Lower leg skin (tissue), 4 donors: ENCODE measurements at regions of chr20 and their contacts with region 1.

Region 1: GRCh38 chr20:38075161-38075998 is 41.8 kb downstream of the RPRD1B start:
- DNase-seq: no peak
- H3K4me3 ChIP-seq: no peak overlapping the region
- CTCF ChIP-seq: no peak
- POLR2A ChIP-seq: no peak

Region 2: DNA sequence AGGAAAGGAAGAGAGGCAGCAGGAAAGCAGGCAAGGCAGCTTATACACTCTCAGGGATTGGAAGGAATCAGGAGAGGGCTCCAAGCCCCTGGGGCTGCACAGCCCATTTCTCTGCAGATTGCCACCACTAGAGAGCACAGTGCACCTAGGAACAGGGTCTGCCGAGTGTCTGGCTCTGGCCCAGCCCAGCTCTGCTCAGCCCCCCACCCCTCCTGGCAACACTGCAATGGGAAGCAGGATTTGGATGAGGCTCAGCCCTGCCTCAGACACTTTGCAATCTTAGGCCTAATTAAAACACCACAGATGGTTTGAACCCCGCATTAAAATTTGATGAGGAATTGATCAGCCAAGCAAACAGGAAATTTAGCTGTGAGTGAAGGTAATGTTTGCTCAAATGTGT is 1139.4 kb after region 1 on chr20:
- intact Hi-C with region 1: loop called (anchors 5 kb)
- DNase-seq: no peak
- H3K4me3 ChIP-seq: no peak overlapping the region
- CTCF ChIP-seq: no peak
- POLR2A ChIP-seq: no peak